ENCODE measurements at regions of chr2 and their contacts with region 1.

Region 1: DNA sequence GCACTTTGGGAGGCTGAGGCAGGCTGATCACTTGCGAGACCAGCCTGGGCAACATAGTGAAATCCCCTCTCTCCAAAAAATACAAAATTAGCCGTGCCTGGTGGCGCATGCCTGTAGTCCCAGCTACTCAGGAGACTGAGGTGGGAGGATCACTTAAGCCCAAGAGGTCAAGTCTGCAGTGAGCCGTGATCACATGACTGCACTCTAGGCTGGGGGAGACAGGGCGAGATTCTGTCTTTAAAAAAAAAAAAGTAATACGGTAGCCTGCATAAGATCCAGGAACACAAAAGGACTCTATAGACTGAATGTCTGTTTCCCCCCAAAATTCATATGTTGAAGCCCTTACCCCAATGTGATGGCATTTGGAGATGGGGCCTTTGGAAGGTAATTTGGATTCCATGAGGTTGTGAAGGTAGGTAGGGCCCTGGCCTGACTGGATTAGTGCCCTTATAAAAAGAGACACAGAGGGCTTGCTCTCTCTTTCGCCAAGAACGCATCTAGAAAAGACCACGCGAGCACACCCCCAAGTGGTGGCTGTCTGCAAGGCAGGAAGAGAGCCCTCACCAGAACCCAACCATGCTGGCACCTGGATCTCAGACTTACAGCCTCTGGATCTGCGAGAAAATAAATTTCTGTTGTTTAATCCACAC is 17.0 kb downstream of the MBOAT2 start:
- DNase-seq: peak in 3 of 4 experiments; percentile 37 to 85 (median 50)
- ATAC-seq: peak; percentile 83
- H3K4me3 ChIP-seq: peak overlapping the region; percentile 35; the same call in 1 of the 2 replicates
- H3K27ac ChIP-seq: peak overlapping the region; percentile 70
- H3K4me1 ChIP-seq: peaks cover 3 to 56% of the 10 kb centered on the region in 2 experiments; a peak in 4 of 5 replicates
- H3K27me3 ChIP-seq: no peaks in the 10 kb centered on the region
- CTCF ChIP-seq: peak; percentile 76 to 84 (median 82)
- EP300 ChIP-seq: no peak
- POLR2A ChIP-seq: no peak
- RAD21 ChIP-seq: peak; percentile 76 to 84

Region 2: DNA sequence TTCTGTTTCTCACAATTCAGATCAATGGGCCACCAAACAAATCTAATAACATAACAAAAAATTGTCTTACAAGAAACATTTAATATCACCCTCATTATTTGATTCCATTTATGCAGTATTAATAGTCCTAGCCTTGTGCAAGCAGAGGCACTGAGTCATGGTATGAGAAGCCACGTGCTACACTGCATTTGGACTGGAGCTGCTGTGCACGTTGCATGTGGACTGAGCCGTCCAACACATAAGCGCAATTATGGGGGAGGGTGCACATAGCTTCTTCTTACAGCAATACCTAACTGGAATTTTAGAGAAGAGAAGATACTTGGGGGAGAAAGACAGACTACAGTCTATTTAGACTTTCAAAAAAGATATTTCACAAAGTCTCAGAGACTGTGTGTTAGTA is 634.2 kb before region 1 on chr2:
- CTCF ChIA-PET with region 1: no interaction called
- POLR2A ChIA-PET with region 1: no interaction called
- in situ Hi-C with region 1: no loop called
- intact Hi-C with region 1: no loop called
- DNase-seq: no peak
- ATAC-seq: no peak
- H3K4me3 ChIP-seq: no peak overlapping the region
- H3K27ac ChIP-seq: no peak overlapping the region
- H3K4me1 ChIP-seq: peaks cover 0 to 2% of the 10 kb centered on the region in 2 experiments; a peak in 2 of 5 replicates
- H3K27me3 ChIP-seq: peaks cover 4 to 26% of the 10 kb centered on the region in 2 experiments; a peak in 3 of 5 replicates
- CTCF ChIP-seq: no peak
- EP300 ChIP-seq: no peak
- POLR2A ChIP-seq: no peak
- RAD21 ChIP-seq: no peak

Region 3: GRCh38 chr2:8693155-8693821 is 293.2 kb before region 1 on chr2:
- CTCF ChIA-PET with region 1: no interaction called
- POLR2A ChIA-PET with region 1: interaction called, 3 read pairs
- in situ Hi-C with region 1: no loop called
- intact Hi-C with region 1: loop called (anchors 5 kb)
- DNase-seq: peak; percentile 58 to 77 (median 73)
- ATAC-seq: peak; percentile 92
- H3K4me3 ChIP-seq: no peak overlapping the region
- H3K27ac ChIP-seq: no peak overlapping the region
- H3K4me1 ChIP-seq: peaks cover 10 to 17% of the 10 kb centered on the region in 2 experiments; a peak in 4 of 5 replicates
- H3K27me3 ChIP-seq: no peaks in the 10 kb centered on the region
- CTCF ChIP-seq: peak; percentile 76 to 89 (median 87)
- EP300 ChIP-seq: no peak
- POLR2A ChIP-seq: no peak
- RAD21 ChIP-seq: peak; percentile 41 to 75; a peak in 3 of 4 replicates

Region 4: GRCh38 chr2:8872821-8873432 is 113.5 kb before region 1 on chr2:
- CTCF ChIA-PET with region 1: no interaction called
- POLR2A ChIA-PET with region 1: interaction called, 3 read pairs
- in situ Hi-C with region 1: no loop called
- intact Hi-C with region 1: loop called (anchors 2 kb)
- DNase-seq: peak; percentile 29 to 59 (median 34)
- ATAC-seq: peak; percentile 67
- H3K4me3 ChIP-seq: no peak overlapping the region
- H3K27ac ChIP-seq: no peak overlapping the region
- H3K4me1 ChIP-seq: peaks cover 0 to 2% of the 10 kb centered on the region in 2 experiments; a peak in 1 of 5 replicates
- H3K27me3 ChIP-seq: no peaks in the 10 kb centered on the region
- CTCF ChIP-seq: peak; percentile 40 to 62 (median 50); a peak in 5 of 6 replicates
- EP300 ChIP-seq: no peak
- POLR2A ChIP-seq: no peak
- RAD21 ChIP-seq: peak; percentile 69 to 75

Region 5: DNA sequence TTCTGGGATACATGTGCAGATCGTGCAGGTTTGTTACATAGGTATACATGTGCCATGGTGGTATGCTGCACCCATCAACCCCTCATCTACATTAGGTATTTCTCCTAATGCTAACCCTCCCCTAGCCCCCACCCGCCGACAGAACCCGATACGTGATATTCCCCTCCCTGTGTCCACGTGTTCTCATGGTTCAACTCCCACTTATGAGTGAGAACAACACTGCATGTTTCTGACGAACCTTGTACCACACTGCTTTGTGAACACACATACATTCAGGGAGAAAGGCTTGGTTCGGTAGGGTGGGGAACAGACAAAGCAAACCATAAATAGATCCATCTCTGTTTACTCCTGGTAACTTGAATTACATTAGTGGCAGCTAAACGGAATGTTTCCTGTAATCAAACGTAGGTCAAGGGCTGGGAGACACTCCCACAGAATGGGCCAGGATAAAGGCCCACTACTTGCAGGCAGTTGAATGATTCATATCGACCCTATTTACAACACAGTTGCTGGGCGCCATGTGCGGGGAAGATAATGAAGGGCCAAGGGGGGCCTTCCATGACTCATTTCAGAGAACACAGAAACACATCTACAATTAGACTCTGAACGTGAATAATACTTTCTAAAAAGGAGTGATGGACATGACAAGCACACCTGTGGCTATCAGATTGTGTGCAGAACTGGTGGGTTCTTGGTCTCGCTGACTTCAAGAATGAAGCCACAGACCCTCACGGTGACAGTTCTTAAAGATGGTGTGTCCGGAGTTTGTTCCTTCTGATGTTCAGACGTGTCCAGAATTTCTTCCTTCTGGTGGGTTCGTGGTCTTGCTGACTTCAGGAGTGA is 92.3 kb before region 1 on chr2:
- CTCF ChIA-PET with region 1: no interaction called
- POLR2A ChIA-PET with region 1: interaction called, 4 read pairs
- in situ Hi-C with region 1: no loop called
- intact Hi-C with region 1: loop called (anchors 5 kb)
- DNase-seq: peak; percentile 52 to 94 (median 74)
- ATAC-seq: peak; percentile 95
- H3K4me3 ChIP-seq: no peak overlapping the region
- H3K27ac ChIP-seq: peak overlapping the region; percentile 99
- H3K4me1 ChIP-seq: peaks cover 13 to 35% of the 10 kb centered on the region in 2 experiments; a peak in 4 of 5 replicates
- H3K27me3 ChIP-seq: no peaks in the 10 kb centered on the region
- CTCF ChIP-seq: no peak
- EP300 ChIP-seq: peak; percentile 95
- POLR2A ChIP-seq: no peak
- RAD21 ChIP-seq: no peak

Region 6: DNA sequence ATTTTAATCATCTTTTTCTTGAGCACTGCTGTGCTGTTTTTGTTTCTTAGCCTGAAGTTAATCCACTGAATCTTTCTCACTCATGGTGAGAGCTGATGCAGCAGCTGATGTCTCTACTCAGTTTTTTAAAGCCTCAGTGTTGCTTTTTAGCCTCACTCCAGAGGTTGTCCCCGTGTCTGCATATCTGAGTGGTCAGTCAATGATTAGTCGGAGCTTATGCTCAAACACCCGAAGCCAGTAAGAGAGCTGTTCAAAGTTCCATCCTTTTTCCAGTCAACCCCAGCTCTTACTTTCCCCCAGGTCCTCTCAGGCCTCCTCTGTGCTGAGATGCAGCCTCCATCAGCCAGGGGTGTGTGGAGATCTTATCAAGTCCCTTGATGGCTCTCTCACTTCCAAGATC is 64.0 kb before region 1 on chr2:
- CTCF ChIA-PET with region 1: interaction called, 3 read pairs
- POLR2A ChIA-PET with region 1: no interaction called
- in situ Hi-C with region 1: no loop called
- intact Hi-C with region 1: loop called (anchors 2 kb)
- DNase-seq: peak in 2 of 4 experiments; percentile 18 to 20
- ATAC-seq: peak; percentile 14; the same call in 2 of the 3 replicates
- H3K4me3 ChIP-seq: no peak overlapping the region
- H3K27ac ChIP-seq: no peak overlapping the region; the same call in 2 of the 3 replicates
- H3K4me1 ChIP-seq: peaks cover 10 to 52% of the 10 kb centered on the region in 2 experiments
- H3K27me3 ChIP-seq: no peaks in the 10 kb centered on the region
- CTCF ChIP-seq: no peak
- EP300 ChIP-seq: no peak
- POLR2A ChIP-seq: no peak
- RAD21 ChIP-seq: no peak

Region 7: DNA sequence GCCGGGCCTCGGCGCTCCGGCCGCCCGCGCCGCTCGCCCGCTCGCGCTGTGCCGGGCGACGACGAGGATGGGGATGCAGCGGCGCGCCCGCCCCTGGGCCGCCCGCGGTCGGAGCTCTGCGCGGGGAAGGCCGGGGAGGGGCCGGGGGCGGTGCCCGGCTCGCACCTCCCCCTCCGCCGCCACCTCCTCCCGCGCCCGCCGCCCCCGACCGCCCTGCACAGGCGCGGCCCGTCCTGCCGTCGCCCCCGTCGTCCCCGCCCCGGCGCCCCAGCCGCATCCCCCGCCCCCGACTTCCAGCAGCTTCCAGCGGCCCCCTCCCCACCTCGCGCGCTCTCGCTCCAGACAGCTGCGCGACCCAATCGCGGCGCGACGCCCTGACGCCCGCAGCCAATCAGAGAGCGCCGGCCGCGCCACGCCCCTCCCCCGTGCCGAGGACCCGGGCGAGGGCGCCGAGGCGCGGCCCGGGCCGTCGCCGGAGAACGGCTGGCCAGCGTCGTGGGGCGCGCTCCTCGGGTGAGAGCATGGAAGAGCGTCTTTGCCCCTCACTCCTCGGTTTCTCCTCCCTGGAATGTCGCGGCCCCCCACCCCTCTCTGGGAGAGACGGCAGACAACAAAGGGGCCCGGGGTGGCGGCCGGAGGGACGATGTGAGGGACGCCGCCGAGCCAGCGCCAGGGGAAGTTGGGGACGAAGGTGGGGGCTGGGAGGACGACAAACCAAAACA is 17.3 kb after region 1 on chr2 and contains the start of gene MBOAT2:
- CTCF ChIA-PET with region 1: no interaction called
- POLR2A ChIA-PET with region 1: interaction called, 9 read pairs
- in situ Hi-C with region 1: no loop called
- intact Hi-C with region 1: loop called (anchors 1 kb)
- DNase-seq: peak; percentile 95 to 99 (median 98)
- ATAC-seq: peak; percentile 87
- H3K4me3 ChIP-seq: peak within 1 kb of the TSS; percentile 68
- H3K27ac ChIP-seq: peak within 1 kb of the TSS; percentile 87
- H3K4me1 ChIP-seq: peaks cover 23 to 30% of the 10 kb centered on the region in 2 experiments; a peak in 4 of 5 replicates
- H3K27me3 ChIP-seq: no peaks in the 10 kb centered on the region
- CTCF ChIP-seq: no peak
- EP300 ChIP-seq: no peak
- POLR2A ChIP-seq: peak; percentile 87
- RAD21 ChIP-seq: no peak
- polyA plus RNA-seq, gene MBOAT2: 8.4 to 11.2 TPM

Region 8: GRCh38 chr2:9174771-9175437 is 188.5 kb after region 1 on chr2:
- CTCF ChIA-PET with region 1: no interaction called
- POLR2A ChIA-PET with region 1: no interaction called
- in situ Hi-C with region 1: no loop called
- intact Hi-C with region 1: no loop called
- DNase-seq: no peak
- ATAC-seq: no peak
- H3K4me3 ChIP-seq: no peak overlapping the region
- H3K27ac ChIP-seq: no peak overlapping the region
- H3K4me1 ChIP-seq: peaks cover 5 to 13% of the 10 kb centered on the region in 2 experiments
- H3K27me3 ChIP-seq: peaks cover 5 to 31% of the 10 kb centered on the region in 2 experiments; a peak in 4 of 5 replicates
- CTCF ChIP-seq: no peak
- EP300 ChIP-seq: no peak
- POLR2A ChIP-seq: no peak
- RAD21 ChIP-seq: no peak

Measured in K562 (cell line).